Breast epithelium (tissue), 4 donors: ENCODE measurements at regions of chr9 and their contacts with region 1.

Region 1: DNA sequence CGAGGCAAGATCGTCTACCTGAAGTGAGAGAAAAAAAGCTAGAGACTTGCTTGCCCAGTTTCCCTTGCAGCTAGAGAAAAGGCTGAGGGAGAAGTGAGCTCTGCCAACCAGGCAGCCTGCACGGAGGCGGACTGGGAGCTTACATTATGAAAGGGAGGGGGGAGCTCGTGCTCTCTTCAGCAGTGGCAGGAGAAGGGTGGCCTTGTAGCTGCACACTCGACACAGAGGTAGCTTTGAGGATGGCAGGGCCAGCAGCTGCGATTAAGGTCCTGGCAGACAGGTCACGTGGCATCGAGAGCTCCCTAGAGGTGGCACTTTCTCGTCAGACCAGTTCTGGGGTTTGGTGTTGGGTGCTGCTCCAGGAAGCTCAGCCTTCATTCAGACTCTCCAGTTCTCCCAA is 26.7 kb downstream of the APBA1 start:
- DNase-seq: peak; percentile 68 to 79
- H3K4me3 ChIP-seq: peak overlapping the region in 2 of 3 donors; percentile 31 to 39
- H3K27ac ChIP-seq: peak overlapping the region; percentile 70 to 76
- H3K4me1 ChIP-seq: no peaks in the 10 kb centered on the region
- H3K27me3 ChIP-seq: no peaks in the 10 kb centered on the region
- CTCF ChIP-seq: no peak
- POLR2A ChIP-seq: no peak

Region 2: DNA sequence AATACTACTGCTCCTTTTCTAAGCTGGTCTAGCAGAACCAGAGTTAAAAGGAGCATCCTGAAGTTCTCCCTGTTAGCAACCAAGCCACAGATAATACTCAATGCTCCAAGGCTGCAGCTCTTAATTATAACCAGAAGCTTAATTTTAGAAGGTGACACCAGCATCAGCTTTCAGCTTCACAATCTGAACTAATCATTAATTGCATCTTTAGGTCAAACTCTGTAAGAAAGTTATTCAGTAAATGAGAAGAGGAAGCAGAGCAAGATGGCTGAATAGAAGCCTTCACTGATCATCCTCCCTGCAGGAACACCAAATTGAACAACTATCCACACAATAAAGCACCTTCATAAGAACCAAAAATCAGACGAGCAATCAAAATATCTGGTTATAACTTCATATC is 11.8 kb before region 1 on chr9:
- intact Hi-C with region 1: loop called (anchors 2 kb)
- DNase-seq: no peak
- H3K4me3 ChIP-seq: no peak overlapping the region
- H3K27ac ChIP-seq: no peak overlapping the region
- H3K4me1 ChIP-seq: peaks cover 0 to under 1% of the 10 kb centered on the region in 2 donors
- H3K27me3 ChIP-seq: no peaks in the 10 kb centered on the region
- CTCF ChIP-seq: no peak
- POLR2A ChIP-seq: no peak

Region 3: GRCh38 chr9:70297141-70297540 is 651.7 kb after region 1 on chr9:
- intact Hi-C with region 1: loop called (anchors 5 kb)
- DNase-seq: no peak
- H3K4me3 ChIP-seq: no peak overlapping the region
- H3K27ac ChIP-seq: no peak overlapping the region
- H3K4me1 ChIP-seq: no peaks in the 10 kb centered on the region
- H3K27me3 ChIP-seq: no peaks in the 10 kb centered on the region
- CTCF ChIP-seq: no peak
- POLR2A ChIP-seq: no peak